ENCODE measurements at regions of chr2 and their contacts with region 1.

Region 1: DNA sequence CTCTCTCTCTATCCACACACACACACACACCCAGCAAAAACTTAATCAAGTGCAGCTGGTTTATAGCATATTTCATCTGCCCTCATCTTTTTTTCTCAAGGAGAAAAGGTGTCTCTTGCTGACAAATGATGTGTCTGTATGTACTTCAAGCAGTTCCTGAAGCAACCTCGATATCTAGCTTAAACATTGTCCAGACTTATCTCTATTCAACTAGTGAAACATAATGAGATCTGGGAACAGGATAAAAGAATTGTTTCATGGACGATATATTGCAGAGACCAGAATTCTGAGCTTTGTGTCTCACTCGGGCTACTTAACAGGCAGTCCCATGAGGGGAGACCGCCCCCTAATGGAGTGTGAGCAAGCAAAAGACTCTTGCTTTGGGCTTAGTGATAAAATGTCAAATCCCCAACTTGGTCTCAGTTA is 929.2 kb upstream of the SOX11 start:
- DNase-seq: peak; percentile 94
- H3K4me3 ChIP-seq: no peak overlapping the region
- H3K27ac ChIP-seq: peak overlapping the region; percentile 84
- H3K4me1 ChIP-seq: peaks cover 42% of the 10 kb centered on the region
- H3K27me3 ChIP-seq: no peaks in the 10 kb centered on the region
- CTCF ChIP-seq: peak; percentile 93

Region 2: GRCh38 chr2:4219571-4219970 is 543.4 kb before region 1 on chr2:
- CTCF ChIA-PET with region 1: interaction called, 3 read pairs
- POLR2A ChIA-PET with region 1: no interaction called
- intact Hi-C with region 1: loop called (anchors 2 kb)
- DNase-seq: peak; percentile 93
- H3K4me3 ChIP-seq: no peak overlapping the region
- H3K27ac ChIP-seq: peak overlapping the region; percentile 74
- H3K4me1 ChIP-seq: peaks cover 39% of the 10 kb centered on the region
- H3K27me3 ChIP-seq: no peaks in the 10 kb centered on the region
- CTCF ChIP-seq: no peak

Region 3: GRCh38 chr2:4272261-4272858 is 490.6 kb before region 1 on chr2:
- CTCF ChIA-PET with region 1: no interaction called
- POLR2A ChIA-PET with region 1: no interaction called
- intact Hi-C with region 1: loop called (anchors 10 kb)
- DNase-seq: no peak
- H3K4me3 ChIP-seq: no peak overlapping the region
- H3K27ac ChIP-seq: no peak overlapping the region
- H3K4me1 ChIP-seq: no peaks in the 10 kb centered on the region
- H3K27me3 ChIP-seq: no peaks in the 10 kb centered on the region
- CTCF ChIP-seq: no peak

Region 4: GRCh38 chr2:5365871-5366461 is 603.0 kb after region 1 on chr2:
- CTCF ChIA-PET with region 1: no interaction called
- POLR2A ChIA-PET with region 1: no interaction called
- intact Hi-C with region 1: loop called (anchors 5 kb)
- DNase-seq: peak; percentile 92
- H3K4me3 ChIP-seq: no peak overlapping the region
- H3K27ac ChIP-seq: no peak overlapping the region
- H3K4me1 ChIP-seq: peaks cover 4% of the 10 kb centered on the region
- H3K27me3 ChIP-seq: no peaks in the 10 kb centered on the region
- CTCF ChIP-seq: peak; percentile 96